ENCODE measurements at regions of chr11 and their contacts with region 1.

Region 1: GRCh38 chr11:58579192-58580129 is 598 bp downstream of the ZFP91 start:
- DNase-seq: peak; percentile 89 to 96 (median 91)
- ATAC-seq: peak; percentile 42 to 49
- H3K4me3 Mint-ChIP-seq: peak overlapping the region; percentile 92 to 100 (median 98)
- H3K27ac Mint-ChIP-seq: peak overlapping the region; percentile 89 to 100 (median 100)
- H3K4me1 Mint-ChIP-seq: peaks cover 26 to 78% (median 66%) of the 10 kb centered on the region in 4 donors
- H3K27me3 Mint-ChIP-seq: peaks cover 0 to 2% (median 0%) of the 10 kb centered on the region in 5 donors

Region 2: DNA sequence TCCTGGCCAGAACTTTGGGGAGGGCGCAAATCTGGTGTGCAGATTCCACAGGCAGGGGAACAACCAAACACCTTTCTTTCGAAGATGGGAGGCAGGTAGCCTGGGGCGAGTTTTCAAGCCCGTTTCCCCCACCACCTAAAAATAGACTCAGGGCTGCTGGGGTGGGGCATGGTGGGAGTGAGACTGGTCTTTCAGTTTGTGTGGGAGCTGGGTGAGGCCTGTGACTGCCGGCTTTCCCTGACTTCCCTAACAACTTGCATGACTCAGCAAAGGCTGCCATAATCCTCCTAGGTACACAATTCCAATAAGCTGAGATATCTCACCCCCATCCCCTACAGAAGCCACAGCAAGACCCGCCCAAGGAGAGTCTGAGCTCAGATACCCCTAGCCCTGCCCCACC is 133.2 kb before region 1 on chr11:
- POLR2A ChIA-PET with region 1: no interaction called
- DNase-seq: no peak
- ATAC-seq: no peak
- H3K4me3 Mint-ChIP-seq: no peak overlapping the region
- H3K27ac Mint-ChIP-seq: no peak overlapping the region
- H3K4me1 Mint-ChIP-seq: peaks cover under 1 to 4% (median 2%) of the 10 kb centered on the region in 4 donors
- H3K27me3 Mint-ChIP-seq: peaks cover 0 to 10% (median 0%) of the 10 kb centered on the region in 5 donors

Region 3: DNA sequence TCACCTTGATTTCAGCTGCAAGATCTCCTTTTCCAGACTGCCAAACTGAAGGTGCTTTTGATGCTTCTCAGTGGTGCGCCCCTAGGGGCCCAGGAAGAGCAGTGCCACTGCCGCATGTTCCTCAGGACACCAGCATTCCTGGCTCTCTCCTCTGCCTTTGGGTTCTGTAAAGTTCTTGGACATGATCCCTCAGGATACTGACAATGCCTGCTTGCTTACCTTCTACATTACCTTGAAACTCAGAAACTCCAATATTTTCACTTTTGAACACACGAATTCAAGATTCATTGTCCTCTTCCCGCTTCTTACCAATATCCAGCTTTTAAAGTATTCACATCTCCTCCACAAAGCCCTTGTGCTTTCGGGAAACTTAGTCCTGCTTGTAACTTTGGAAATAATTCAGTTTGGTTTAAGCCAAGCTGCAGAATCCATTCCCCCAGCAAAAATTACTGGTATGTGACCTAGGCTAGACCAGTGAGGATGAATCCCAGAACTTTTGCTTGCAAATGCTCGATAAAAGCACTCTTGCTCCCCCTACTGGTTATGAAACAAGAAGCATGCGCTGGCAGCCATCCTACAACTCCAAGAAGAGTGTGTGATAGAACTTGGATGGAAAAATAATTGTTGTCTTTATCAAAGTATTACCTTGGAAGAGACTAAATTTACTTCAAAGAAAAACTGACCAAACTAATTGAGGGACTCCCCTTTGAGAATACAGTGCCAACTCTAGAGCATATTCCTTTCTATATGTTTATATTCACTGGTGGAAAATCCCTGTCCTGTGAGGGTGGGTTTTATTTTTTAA is 55.0 kb before region 1 on chr11:
- POLR2A ChIA-PET with region 1: interaction called, 36 read pairs
- DNase-seq: peak in 9 of 10 donors; percentile 26 to 76 (median 66)
- ATAC-seq: peak; percentile 58 to 67
- H3K4me3 Mint-ChIP-seq: peak overlapping the region; percentile 49 to 86 (median 77)
- H3K27ac Mint-ChIP-seq: peak overlapping the region; percentile 91 to 98 (median 96)
- H3K4me1 Mint-ChIP-seq: peaks cover 33 to 80% (median 70%) of the 10 kb centered on the region in 4 donors
- H3K27me3 Mint-ChIP-seq: no peaks in the 10 kb centered on the region

Region 4: DNA sequence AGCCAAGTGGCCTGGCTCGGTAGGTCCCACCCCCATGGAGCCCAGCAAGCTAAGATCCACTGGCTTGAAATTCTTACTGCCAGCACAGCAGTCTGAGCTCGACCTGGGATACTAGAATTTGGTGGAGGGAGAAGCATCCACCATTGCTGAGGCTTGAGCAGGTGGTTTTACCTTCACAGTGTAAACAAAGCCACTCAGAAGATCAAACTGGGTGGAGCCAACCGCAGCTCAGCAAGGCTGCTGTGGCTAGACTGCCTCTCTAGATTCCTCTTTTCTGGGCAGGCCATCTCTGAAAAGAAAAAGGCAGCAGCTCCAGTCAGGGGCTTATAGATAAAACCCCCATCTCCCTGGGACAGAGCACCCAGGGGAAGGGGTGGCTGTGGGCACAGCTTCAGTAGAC is 49.2 kb before region 1 on chr11:
- POLR2A ChIA-PET with region 1: interaction called, 36 read pairs
- DNase-seq: peak in 9 of 10 donors; percentile 32 to 83 (median 56)
- ATAC-seq: peak; percentile 86 to 90
- H3K4me3 Mint-ChIP-seq: peak overlapping the region; percentile 24 to 74 (median 56)
- H3K27ac Mint-ChIP-seq: peak overlapping the region; percentile 86 to 97 (median 94)
- H3K4me1 Mint-ChIP-seq: peaks cover 26 to 75% (median 59%) of the 10 kb centered on the region in 4 donors
- H3K27me3 Mint-ChIP-seq: no peaks in the 10 kb centered on the region

Region 5: GRCh38 chr11:58567889-58568512 is 11.5 kb before region 1 on chr11:
- POLR2A ChIA-PET with region 1: interaction called, 82 read pairs
- DNase-seq: peak; percentile 60 to 86 (median 78)
- ATAC-seq: peak; percentile 98 to 99
- H3K4me3 Mint-ChIP-seq: peak overlapping the region; percentile 17 to 88 (median 74)
- H3K27ac Mint-ChIP-seq: peak overlapping the region; percentile 29 to 100 (median 78)
- H3K4me1 Mint-ChIP-seq: peaks cover 25 to 78% (median 62%) of the 10 kb centered on the region in 4 donors
- H3K27me3 Mint-ChIP-seq: no peaks in the 10 kb centered on the region

Region 6: GRCh38 chr11:58629857-58630256 is 50.4 kb after region 1 on chr11:
- POLR2A ChIA-PET with region 1: interaction called, 10 read pairs
- DNase-seq: peak in 2 of 10 donors; percentile 30 to 31
- ATAC-seq: peak; percentile 46 to 48
- H3K4me3 Mint-ChIP-seq: no peak overlapping the region
- H3K27ac Mint-ChIP-seq: peak overlapping the region in 7 of 10 donors; percentile 1 to 90 (median 65)
- H3K4me1 Mint-ChIP-seq: peaks cover 5 to 12% (median 7%) of the 10 kb centered on the region in 4 donors
- H3K27me3 Mint-ChIP-seq: no peaks in the 10 kb centered on the region

Measured in naive thymus-derived CD8-positive, alpha-beta T cell (primary cell).